GM12878 (cell line): ENCODE measurements at regions of chr15 and their contacts with region 1.

Region 1: GRCh38 chr15:99275525-99276128 is 24.3 kb downstream of the LRRC28 start:
- DNase-seq: no peak
- ATAC-seq: peak; percentile 38
- H3K4me3 ChIP-seq: no peak overlapping the region
- H3K27ac ChIP-seq: no peak overlapping the region
- H3K4me1 ChIP-seq: no peaks in the 10 kb centered on the region
- H3K27me3 ChIP-seq: no peaks in the 10 kb centered on the region
- CTCF ChIP-seq: no peak
- EP300 ChIP-seq: no peak
- POLR2A ChIP-seq: no peak
- RAD21 ChIP-seq: no peak

Region 2: GRCh38 chr15:99143655-99144610 is 131.7 kb before region 1 on chr15:
- CTCF ChIA-PET with region 1: no interaction called
- POLR2A ChIA-PET with region 1: no interaction called
- RAD21 ChIA-PET with region 1: no interaction called
- SMC1A ChIA-PET with region 1: no interaction called
- in situ Hi-C with region 1: no loop called
- intact Hi-C with region 1: no loop called
- DNase-seq: no peak
- ATAC-seq: no peak
- H3K4me3 ChIP-seq: no peak overlapping the region
- H3K27ac ChIP-seq: no peak overlapping the region
- H3K4me1 ChIP-seq: no peaks in the 10 kb centered on the region
- H3K27me3 ChIP-seq: no peaks in the 10 kb centered on the region
- CTCF ChIP-seq: no peak
- EP300 ChIP-seq: no peak
- POLR2A ChIP-seq: no peak
- RAD21 ChIP-seq: no peak

Region 3: GRCh38 chr15:99250494-99251435 is 24.9 kb before region 1 on chr15:
- CTCF ChIA-PET with region 1: interaction called, 51 read pairs
- POLR2A ChIA-PET with region 1: interaction called, 5 read pairs
- RAD21 ChIA-PET with region 1: interaction called, 13 read pairs
- SMC1A ChIA-PET with region 1: interaction called, 23 read pairs
- in situ Hi-C with region 1: no loop called
- intact Hi-C with region 1: no loop called
- DNase-seq: peak; percentile 99
- ATAC-seq: peak; percentile 91
- H3K4me3 ChIP-seq: peak overlapping the region; percentile 75
- H3K27ac ChIP-seq: peak overlapping the region; percentile 84
- H3K4me1 ChIP-seq: peaks cover 11% of the 10 kb centered on the region
- H3K27me3 ChIP-seq: no peaks in the 10 kb centered on the region
- CTCF ChIP-seq: no peak
- EP300 ChIP-seq: no peak
- POLR2A ChIP-seq: peak; percentile 88
- RAD21 ChIP-seq: no peak

Region 4: GRCh38 chr15:99343881-99344551 is 68.4 kb after region 1 on chr15:
- CTCF ChIA-PET with region 1: interaction called, 13 read pairs
- POLR2A ChIA-PET with region 1: no interaction called
- RAD21 ChIA-PET with region 1: interaction called, 7 read pairs
- SMC1A ChIA-PET with region 1: interaction called, 3 read pairs
- in situ Hi-C with region 1: no loop called
- intact Hi-C with region 1: no loop called
- DNase-seq: no peak
- ATAC-seq: peak; percentile 80
- H3K4me3 ChIP-seq: no peak overlapping the region
- H3K27ac ChIP-seq: no peak overlapping the region
- H3K4me1 ChIP-seq: peaks cover 16% of the 10 kb centered on the region
- H3K27me3 ChIP-seq: no peaks in the 10 kb centered on the region
- CTCF ChIP-seq: peak; percentile 45 to 52 (median 47); a peak in 5 of 6 replicates
- EP300 ChIP-seq: no peak
- POLR2A ChIP-seq: no peak
- RAD21 ChIP-seq: peak; percentile 54

Region 5: GRCh38 chr15:99526176-99526575 is 250.5 kb after region 1 on chr15:
- CTCF ChIA-PET with region 1: no interaction called
- POLR2A ChIA-PET with region 1: no interaction called
- RAD21 ChIA-PET with region 1: no interaction called
- SMC1A ChIA-PET with region 1: no interaction called
- in situ Hi-C with region 1: no loop called
- intact Hi-C with region 1: no loop called
- DNase-seq: no peak
- ATAC-seq: no peak
- H3K4me3 ChIP-seq: no peak overlapping the region
- H3K27ac ChIP-seq: no peak overlapping the region
- H3K4me1 ChIP-seq: peaks cover 10% of the 10 kb centered on the region; the same call in 1 of the 2 replicates
- H3K27me3 ChIP-seq: no peaks in the 10 kb centered on the region
- CTCF ChIP-seq: no peak
- EP300 ChIP-seq: no peak
- POLR2A ChIP-seq: no peak
- RAD21 ChIP-seq: no peak

Region 6: DNA sequence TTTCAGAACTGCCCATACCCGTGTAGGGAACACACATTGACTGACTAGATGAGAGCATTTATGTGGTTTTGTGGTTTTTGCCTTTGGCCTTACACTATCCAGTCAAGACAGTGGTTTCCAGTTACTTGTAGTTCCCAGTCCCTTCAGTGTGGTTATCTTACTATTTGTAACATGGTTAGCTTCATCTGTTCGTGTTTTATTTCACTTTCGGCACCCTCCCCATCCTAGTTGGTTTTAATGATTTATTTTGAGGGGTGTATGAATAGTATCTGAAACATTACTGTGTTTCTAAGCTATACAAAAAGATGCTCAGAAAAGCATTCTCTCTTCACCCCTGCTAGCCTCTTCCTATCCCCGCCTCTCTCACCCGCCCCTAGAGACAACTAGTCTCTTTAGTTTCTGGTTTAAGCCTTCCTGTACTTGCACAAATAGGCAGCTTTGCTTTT is 443.5 kb after region 1 on chr15:
- CTCF ChIA-PET with region 1: interaction called, 12 read pairs
- POLR2A ChIA-PET with region 1: no interaction called
- RAD21 ChIA-PET with region 1: interaction called, 4 read pairs
- SMC1A ChIA-PET with region 1: interaction called, 6 read pairs
- in situ Hi-C with region 1: no loop called
- intact Hi-C with region 1: no loop called
- DNase-seq: peak; percentile 83
- ATAC-seq: peak; percentile 93
- H3K4me3 ChIP-seq: peak overlapping the region; percentile 30
- H3K27ac ChIP-seq: peak overlapping the region; percentile 76
- H3K4me1 ChIP-seq: peaks cover 42% of the 10 kb centered on the region
- H3K27me3 ChIP-seq: no peaks in the 10 kb centered on the region
- CTCF ChIP-seq: no peak
- EP300 ChIP-seq: peak; percentile 59 to 73; a peak in 3 of 4 replicates
- POLR2A ChIP-seq: no peak
- RAD21 ChIP-seq: no peak

Region 7: GRCh38 chr15:99755692-99756409 is 480.2 kb after region 1 on chr15:
- CTCF ChIA-PET with region 1: interaction called, 105 read pairs
- POLR2A ChIA-PET with region 1: no interaction called
- RAD21 ChIA-PET with region 1: interaction called, 61 read pairs
- SMC1A ChIA-PET with region 1: interaction called, 37 read pairs
- in situ Hi-C with region 1: no loop called
- intact Hi-C with region 1: loop called (anchors 2 kb)
- DNase-seq: peak; percentile 43
- ATAC-seq: peak; percentile 99
- H3K4me3 ChIP-seq: no peak overlapping the region
- H3K27ac ChIP-seq: no peak overlapping the region
- H3K4me1 ChIP-seq: peaks cover 5% of the 10 kb centered on the region
- H3K27me3 ChIP-seq: no peaks in the 10 kb centered on the region
- CTCF ChIP-seq: peak; percentile 80 to 91 (median 88)
- EP300 ChIP-seq: no peak
- POLR2A ChIP-seq: no peak
- RAD21 ChIP-seq: peak; percentile 96

Region 8: DNA sequence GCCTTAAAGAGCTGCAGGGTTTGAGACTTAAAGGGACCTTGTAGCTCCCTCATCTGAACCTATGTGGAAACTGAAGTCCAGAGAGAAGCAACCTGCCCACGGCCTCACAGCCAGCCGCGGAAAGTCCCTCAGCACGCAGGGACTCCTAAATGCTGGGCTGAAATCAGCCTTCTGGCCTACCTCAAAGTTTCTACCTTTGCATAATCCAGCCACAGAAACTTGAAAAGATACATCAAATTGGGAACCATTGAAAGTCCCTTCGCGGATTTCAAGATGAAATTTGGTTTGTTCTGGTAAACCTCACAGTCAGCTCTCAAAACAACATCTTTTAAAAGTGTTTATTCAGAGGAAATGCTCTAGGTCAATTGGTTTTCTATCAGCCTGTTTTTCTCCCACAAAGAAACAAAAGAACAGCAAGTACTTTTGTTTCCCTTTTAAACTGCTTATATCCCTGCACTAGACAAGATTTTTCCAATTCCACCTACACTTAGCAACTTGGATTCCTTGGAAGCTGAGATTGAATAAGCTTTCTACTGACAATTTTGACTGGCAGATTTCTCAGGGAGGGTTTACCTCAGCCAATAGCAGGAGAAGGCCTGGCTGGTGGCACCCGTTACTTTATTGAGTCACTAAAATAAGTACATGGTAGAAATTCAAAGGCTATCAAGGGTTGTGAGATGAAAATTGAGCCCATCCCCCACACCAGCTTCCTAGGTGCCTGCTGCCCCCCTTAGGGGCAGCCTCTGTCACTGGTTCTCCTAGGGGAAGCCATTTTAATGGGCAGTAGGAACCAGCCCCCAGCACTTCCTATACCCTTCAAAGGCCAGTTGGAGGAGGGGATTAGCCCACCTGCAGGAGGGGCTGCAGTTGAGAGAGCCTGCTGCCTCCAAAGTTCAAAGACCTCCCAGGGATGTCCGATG is 894.9 kb after region 1 on chr15:
- CTCF ChIA-PET with region 1: no interaction called
- POLR2A ChIA-PET with region 1: no interaction called
- RAD21 ChIA-PET with region 1: no interaction called
- SMC1A ChIA-PET with region 1: no interaction called
- in situ Hi-C with region 1: no loop called
- intact Hi-C with region 1: no loop called
- DNase-seq: peak; percentile 89
- ATAC-seq: peak; percentile 92
- H3K4me3 ChIP-seq: no peak overlapping the region
- H3K27ac ChIP-seq: peak overlapping the region; percentile 62
- H3K4me1 ChIP-seq: peaks cover 19% of the 10 kb centered on the region
- H3K27me3 ChIP-seq: no peaks in the 10 kb centered on the region
- CTCF ChIP-seq: peak in 1 of 3 experiments; percentile 9; a peak in 1 of 6 replicates
- EP300 ChIP-seq: peak; percentile 55 to 56; a peak in 2 of 4 replicates
- POLR2A ChIP-seq: no peak
- RAD21 ChIP-seq: peak; percentile 31